ENCODE measurements at regions of chr7 and their contacts with region 1.

Region 1: DNA sequence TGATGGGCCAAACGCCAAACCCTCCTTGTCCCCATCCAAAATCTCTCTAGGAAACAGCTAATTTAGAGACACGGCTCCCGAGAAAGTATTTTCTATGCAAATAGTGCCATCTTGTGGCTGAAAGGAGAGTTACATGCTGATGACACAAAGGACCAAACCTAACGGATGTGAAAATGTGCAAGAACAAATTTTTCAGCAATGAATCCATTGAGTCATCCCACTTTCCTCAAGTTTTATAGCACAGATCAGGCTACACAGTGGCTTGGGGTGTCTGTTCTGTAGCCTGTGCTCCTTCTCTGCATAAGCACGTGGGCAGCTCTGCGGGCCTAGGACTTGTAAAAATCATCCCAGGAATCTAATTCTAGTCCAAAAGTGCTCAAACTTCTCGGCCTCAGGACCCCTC is 154.8 kb upstream of the PRR15 start:
- DNase-seq: peak; percentile 70
- H3K4me3 ChIP-seq: no peak overlapping the region
- H3K27ac ChIP-seq: no peak overlapping the region
- H3K4me1 ChIP-seq: peaks cover 7% of the 10 kb centered on the region
- H3K27me3 ChIP-seq: no peaks in the 10 kb centered on the region
- CTCF ChIP-seq: peak; percentile 74 to 77

Region 2: DNA sequence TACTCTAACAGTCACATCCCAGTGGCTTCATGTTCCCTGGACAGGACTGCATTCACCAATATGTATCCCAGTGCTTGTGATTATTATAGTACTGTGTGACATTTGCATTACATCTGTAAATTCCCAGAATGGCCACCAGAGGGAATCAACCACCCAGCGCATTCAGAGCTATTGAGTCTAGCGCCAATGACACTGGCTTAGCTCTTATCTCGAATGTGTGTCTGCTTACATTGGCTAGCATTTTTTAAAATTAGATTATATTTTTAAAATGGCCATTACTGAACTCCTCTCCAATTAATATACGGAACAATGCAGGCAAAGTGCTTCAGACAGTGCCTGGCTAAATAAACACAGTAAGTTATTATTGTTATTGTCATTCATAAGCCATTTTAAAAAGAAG is 487.0 kb before region 1 on chr7:
- CTCF ChIA-PET with region 1: interaction called, 11 read pairs
- dilution Hi-C with region 1: loop called (anchors 5 kb)
- in situ Hi-C with region 1: loop called (anchors 5 kb)
- intact Hi-C with region 1: loop called (anchors 1 kb)
- DNase-seq: peak; percentile 44
- H3K4me3 ChIP-seq: no peak overlapping the region
- H3K27ac ChIP-seq: no peak overlapping the region
- H3K4me1 ChIP-seq: peaks cover 4% of the 10 kb centered on the region
- H3K27me3 ChIP-seq: no peaks in the 10 kb centered on the region
- CTCF ChIP-seq: peak; percentile 82 to 90

Region 3: DNA sequence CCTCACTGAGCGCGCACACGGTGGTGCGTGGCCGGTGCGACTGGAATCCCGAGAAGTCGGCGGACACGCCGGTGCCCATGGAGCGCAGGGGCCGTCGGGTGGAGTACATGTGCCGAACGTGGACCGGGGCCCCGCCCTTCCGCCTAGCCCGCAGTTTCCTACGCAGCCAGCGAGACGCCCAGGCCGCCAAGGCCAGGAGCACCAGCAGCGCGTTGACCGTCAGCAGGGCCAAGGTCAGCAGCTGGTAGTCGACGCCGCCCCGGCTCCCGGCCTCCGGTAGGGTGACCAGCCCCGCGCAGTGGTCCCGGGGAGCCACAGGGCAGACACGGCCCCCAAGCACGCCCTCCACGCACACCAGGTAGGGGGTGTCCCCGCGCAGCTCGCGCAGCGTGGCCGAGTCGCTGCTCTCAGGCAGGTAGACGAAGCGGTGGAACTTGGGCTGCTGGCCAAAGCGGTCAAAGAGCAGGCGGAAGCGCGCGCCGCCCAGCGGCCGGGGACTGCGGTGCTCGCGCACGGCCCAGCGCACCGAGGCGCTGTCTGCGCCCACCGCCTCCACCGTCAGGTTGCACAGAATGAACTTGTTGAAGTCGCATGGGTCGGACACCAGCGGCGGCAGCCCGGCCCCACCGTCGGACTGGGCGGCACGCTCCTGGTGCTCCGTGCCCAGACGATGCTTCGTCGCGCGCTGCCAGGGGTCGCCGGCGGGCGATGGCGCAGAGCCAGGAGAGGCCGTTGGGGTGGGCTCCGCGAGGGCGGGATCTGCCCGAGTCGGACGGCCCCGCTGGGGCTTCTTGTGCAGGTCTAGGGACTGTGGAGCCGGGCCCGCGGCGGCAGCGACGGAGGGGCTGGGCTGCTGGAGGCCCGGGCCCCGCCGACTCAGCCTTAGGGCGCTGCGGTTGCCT is 452.9 kb before region 1 on chr7:
- CTCF ChIA-PET with region 1: no interaction called
- dilution Hi-C with region 1: no loop called
- in situ Hi-C with region 1: no loop called
- intact Hi-C with region 1: loop called (anchors 1 kb)
- DNase-seq: peak; percentile 35
- H3K4me3 ChIP-seq: peak overlapping the region; percentile 15 to 47 (median 38)
- H3K27ac ChIP-seq: no peak overlapping the region
- H3K4me1 ChIP-seq: peaks cover 23% of the 10 kb centered on the region
- H3K27me3 ChIP-seq: peaks cover 35% of the 10 kb centered on the region
- CTCF ChIP-seq: peak; percentile 57 to 77

Region 4: DNA sequence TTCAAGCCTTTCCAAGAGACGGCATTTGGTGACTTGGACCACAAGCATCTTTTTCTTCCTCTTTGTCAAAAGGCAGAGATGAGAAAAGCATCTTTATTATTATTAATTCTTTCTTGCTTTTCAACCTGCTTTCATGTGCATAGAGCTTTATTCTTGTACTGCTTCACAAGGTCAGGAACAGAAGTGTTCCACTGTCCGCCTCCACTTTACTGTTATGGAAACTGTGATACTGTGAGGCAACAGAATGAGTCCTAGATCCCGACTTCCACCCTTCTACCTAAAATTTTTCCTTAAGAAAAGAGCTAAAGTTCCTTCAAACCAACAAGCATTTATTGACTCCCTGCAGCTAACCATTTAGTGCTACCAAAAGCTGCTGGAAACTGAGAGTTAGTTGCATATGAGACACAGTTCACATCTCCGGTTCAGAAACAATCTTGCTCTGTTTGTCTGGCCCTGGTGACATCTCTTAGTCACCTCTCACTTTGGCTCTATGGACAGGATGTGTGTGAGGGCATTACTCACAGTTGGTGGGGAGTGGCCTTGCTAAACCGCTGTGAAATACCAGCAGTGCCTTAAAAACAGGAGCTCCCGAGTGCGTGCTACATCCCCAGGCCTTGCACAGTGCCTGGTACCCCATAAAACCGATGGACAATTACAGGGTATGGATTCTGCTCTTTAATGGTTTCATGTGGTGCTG is 373.6 kb before region 1 on chr7:
- CTCF ChIA-PET with region 1: no interaction called
- dilution Hi-C with region 1: no loop called
- in situ Hi-C with region 1: no loop called
- intact Hi-C with region 1: no loop called
- DNase-seq: peak; percentile 83
- H3K4me3 ChIP-seq: no peak overlapping the region
- H3K27ac ChIP-seq: no peak overlapping the region
- H3K4me1 ChIP-seq: peaks cover 10% of the 10 kb centered on the region
- H3K27me3 ChIP-seq: no peaks in the 10 kb centered on the region
- CTCF ChIP-seq: no peak

Region 5: GRCh38 chr7:29113384-29114103 is 295.3 kb before region 1 on chr7:
- CTCF ChIA-PET with region 1: interaction called, 5 read pairs
- dilution Hi-C with region 1: no loop called
- in situ Hi-C with region 1: loop called (anchors 5 to 10 kb)
- intact Hi-C with region 1: loop called (anchors 1 kb)
- DNase-seq: peak; percentile 91
- H3K4me3 ChIP-seq: peak overlapping the region in 1 of 3 experiments; percentile 32
- H3K27ac ChIP-seq: peak overlapping the region; percentile 53
- H3K4me1 ChIP-seq: peaks cover 54% of the 10 kb centered on the region
- H3K27me3 ChIP-seq: no peaks in the 10 kb centered on the region
- CTCF ChIP-seq: peak; percentile 44 to 58

Region 6: GRCh38 chr7:29239638-29240037 is 169.2 kb before region 1 on chr7:
- CTCF ChIA-PET with region 1: no interaction called
- dilution Hi-C with region 1: no loop called
- in situ Hi-C with region 1: loop called in 1 of 2 experiments (anchors 10 kb)
- intact Hi-C with region 1: loop called (anchors 1 kb)
- DNase-seq: no peak
- H3K4me3 ChIP-seq: no peak overlapping the region
- H3K27ac ChIP-seq: no peak overlapping the region
- H3K4me1 ChIP-seq: no peaks in the 10 kb centered on the region
- H3K27me3 ChIP-seq: no peaks in the 10 kb centered on the region
- CTCF ChIP-seq: peak; percentile 79 to 87

Region 7: DNA sequence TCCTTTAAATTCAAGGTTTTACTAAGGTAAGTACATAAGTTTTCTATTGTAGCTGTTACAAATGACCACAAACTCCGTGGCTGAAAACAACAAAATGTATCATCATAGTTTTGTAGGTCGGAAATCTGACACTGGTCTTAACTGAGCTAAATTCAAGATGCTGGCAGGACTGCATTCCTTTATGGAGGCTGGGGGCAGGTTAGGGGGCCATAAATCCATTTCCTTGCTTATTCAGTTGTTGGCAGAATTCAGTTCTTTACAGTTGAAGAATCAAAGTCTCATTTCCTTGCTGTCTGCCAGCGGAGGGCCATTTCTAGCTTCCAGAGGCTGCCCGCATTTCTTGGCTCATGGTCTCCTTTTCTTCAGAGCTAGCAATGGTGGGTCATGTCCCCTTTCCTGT is 143.6 kb after region 1 on chr7:
- CTCF ChIA-PET with region 1: no interaction called
- dilution Hi-C with region 1: no loop called
- in situ Hi-C with region 1: no loop called
- intact Hi-C with region 1: no loop called
- DNase-seq: no peak
- H3K4me3 ChIP-seq: no peak overlapping the region
- H3K27ac ChIP-seq: no peak overlapping the region
- H3K4me1 ChIP-seq: no peaks in the 10 kb centered on the region
- H3K27me3 ChIP-seq: no peaks in the 10 kb centered on the region
- CTCF ChIP-seq: no peak

Region 8: DNA sequence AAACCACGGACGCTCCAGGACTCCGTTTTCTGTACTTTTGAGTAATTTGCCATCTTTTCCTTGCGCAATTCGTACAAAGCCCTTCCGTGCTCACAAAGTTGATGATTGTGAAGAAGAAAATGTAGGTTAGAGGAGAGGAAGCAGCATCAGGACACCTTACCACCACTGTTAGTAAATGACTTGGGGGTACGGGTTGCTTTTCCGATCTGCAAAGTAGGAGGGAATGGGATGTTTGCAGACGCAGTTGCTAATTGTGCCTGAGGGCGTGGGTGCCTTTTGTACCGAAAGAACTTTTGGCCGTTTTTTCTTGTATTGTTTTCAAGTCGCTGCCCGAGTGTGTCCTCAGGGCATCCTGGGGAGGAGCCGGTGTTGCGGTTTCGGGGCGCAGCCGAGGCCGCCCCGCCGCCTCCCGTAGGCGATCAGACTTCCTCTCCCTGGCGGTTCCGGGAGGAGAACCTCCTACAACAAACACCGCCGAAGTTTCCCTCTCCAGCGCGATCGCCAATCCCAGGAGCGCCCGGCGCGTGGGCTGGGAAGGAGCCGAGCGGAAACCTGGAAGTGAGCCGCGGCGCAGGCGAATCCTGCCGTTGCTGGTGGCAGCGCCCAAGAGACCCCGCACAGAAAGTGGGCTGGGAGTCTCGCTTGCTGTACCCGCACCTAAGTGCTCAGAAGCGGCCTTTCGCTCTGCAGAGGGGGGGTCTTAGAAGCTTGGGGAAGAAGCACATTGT is 155.8 kb after region 1 on chr7:
- CTCF ChIA-PET with region 1: no interaction called
- dilution Hi-C with region 1: no loop called
- in situ Hi-C with region 1: no loop called
- intact Hi-C with region 1: loop called (anchors 5 kb)
- DNase-seq: peak; percentile 85
- H3K4me3 ChIP-seq: peak overlapping the region; percentile 64 to 84 (median 72)
- H3K27ac ChIP-seq: peak overlapping the region; percentile 78
- H3K4me1 ChIP-seq: peaks cover 29% of the 10 kb centered on the region
- H3K27me3 ChIP-seq: no peaks in the 10 kb centered on the region
- CTCF ChIP-seq: no peak

Measured in mammary epithelial cell (primary cell).